B cell (primary cell): ENCODE measurements at regions of chr1 and their contacts with region 1.

Region 1: GRCh38 chr1:59947047-59947938 is 20.7 kb upstream of the CYP2J2 start:
- DNase-seq: peak; percentile 61
- ATAC-seq: peak; percentile 75
- H3K4me3 ChIP-seq: no peak overlapping the region
- H3K4me3 Mint-ChIP-seq: no peak overlapping the region
- H3K27ac ChIP-seq: no peak overlapping the region
- H3K27ac Mint-ChIP-seq: no peak overlapping the region
- H3K4me1 ChIP-seq: no peaks in the 10 kb centered on the region
- H3K4me1 Mint-ChIP-seq: no peaks in the 10 kb centered on the region
- H3K27me3 ChIP-seq: peaks cover 0 to 5% (median 2%) of the 10 kb centered on the region in 4 experiments
- H3K27me3 Mint-ChIP-seq: peaks cover 10% of the 10 kb centered on the region
- CTCF ChIP-seq: peak; percentile 93

Region 2: DNA sequence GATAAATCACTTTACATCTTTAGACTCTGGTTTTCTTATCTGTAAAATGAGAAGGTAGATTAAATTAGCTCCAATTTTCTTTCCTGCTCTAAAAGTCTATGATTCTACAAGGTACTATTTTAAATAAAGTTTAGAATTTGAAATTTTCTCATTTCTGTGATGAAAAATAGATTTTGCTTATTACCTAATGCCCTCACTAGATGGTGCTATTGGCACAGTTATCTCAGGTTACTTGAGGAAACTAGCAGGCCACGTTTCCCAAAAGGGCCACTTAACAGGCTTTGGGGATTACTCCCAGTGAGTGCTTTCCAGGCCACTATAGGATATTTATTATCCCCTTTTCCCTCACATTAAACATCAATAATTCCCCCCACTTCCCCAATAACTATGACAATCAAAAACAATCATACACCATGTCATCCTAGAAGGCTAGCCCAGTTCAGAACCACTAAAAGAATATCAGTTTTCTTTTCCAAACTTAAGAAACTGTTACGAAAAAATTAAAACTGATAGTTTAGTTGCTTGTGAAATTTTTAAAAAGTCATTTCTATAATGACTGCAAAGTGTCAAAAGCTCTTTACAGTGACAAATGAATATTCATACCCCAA is 1431.4 kb before region 1 on chr1:
- CTCF ChIA-PET with region 1: interaction called, 7 read pairs
- POLR2A ChIA-PET with region 1: no interaction called
- intact Hi-C with region 1: loop called (anchors 5 kb)
- DNase-seq: peak; percentile 76
- ATAC-seq: peak; percentile 51
- H3K4me3 ChIP-seq: no peak overlapping the region
- H3K4me3 Mint-ChIP-seq: no peak overlapping the region
- H3K27ac ChIP-seq: peak overlapping the region in 1 of 2 donors; percentile 9
- H3K27ac Mint-ChIP-seq: peak overlapping the region; percentile 46
- H3K4me1 ChIP-seq: no peaks in the 10 kb centered on the region
- H3K4me1 Mint-ChIP-seq: no peaks in the 10 kb centered on the region
- H3K27me3 ChIP-seq: no peaks in the 10 kb centered on the region
- H3K27me3 Mint-ChIP-seq: no peaks in the 10 kb centered on the region
- CTCF ChIP-seq: peak; percentile 90

Region 3: GRCh38 chr1:58739856-58740466 is 1207.3 kb before region 1 on chr1:
- CTCF ChIA-PET with region 1: no interaction called
- POLR2A ChIA-PET with region 1: no interaction called
- intact Hi-C with region 1: loop called (anchors 1 kb)
- DNase-seq: peak; percentile 75
- ATAC-seq: peak; percentile 61
- H3K4me3 ChIP-seq: no peak overlapping the region
- H3K4me3 Mint-ChIP-seq: no peak overlapping the region
- H3K27ac ChIP-seq: no peak overlapping the region
- H3K27ac Mint-ChIP-seq: no peak overlapping the region
- H3K4me1 ChIP-seq: no peaks in the 10 kb centered on the region
- H3K4me1 Mint-ChIP-seq: no peaks in the 10 kb centered on the region
- H3K27me3 ChIP-seq: no peaks in the 10 kb centered on the region
- H3K27me3 Mint-ChIP-seq: peaks cover 12% of the 10 kb centered on the region
- CTCF ChIP-seq: peak; percentile 98

Region 4: DNA sequence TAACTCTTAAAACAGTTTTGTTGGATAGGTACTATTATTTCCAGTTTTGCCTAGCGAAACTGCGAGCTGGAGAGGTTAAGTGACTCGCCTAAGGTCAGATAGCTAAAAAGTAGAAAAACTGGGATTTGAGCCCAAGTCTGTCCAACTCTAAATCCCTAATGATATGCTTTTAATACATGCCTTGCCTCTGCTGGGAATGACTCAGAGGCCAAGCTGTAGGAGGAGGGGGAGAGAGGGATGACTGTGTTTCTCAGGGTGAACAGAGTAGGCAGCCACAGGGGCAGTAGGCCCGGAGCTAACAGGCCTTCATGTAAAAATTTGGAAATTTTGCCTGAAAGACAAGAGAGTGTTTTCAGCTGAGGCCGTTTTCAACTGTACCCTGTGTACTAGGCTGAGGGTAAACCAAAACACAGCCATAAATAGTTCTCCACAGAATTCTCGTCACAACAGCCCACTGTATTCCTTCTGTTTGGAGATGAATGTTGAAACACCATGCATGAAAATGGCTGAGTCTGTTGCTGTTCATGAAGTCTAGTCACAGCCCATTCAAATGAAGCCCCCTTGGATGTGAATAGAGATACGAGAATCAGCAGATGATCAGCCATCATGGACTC is 240.0 kb before region 1 on chr1:
- CTCF ChIA-PET with region 1: no interaction called
- POLR2A ChIA-PET with region 1: no interaction called
- intact Hi-C with region 1: no loop called
- DNase-seq: no peak
- ATAC-seq: no peak
- H3K4me3 ChIP-seq: no peak overlapping the region
- H3K4me3 Mint-ChIP-seq: no peak overlapping the region
- H3K27ac ChIP-seq: no peak overlapping the region
- H3K27ac Mint-ChIP-seq: no peak overlapping the region
- H3K4me1 ChIP-seq: no peaks in the 10 kb centered on the region
- H3K4me1 Mint-ChIP-seq: no peaks in the 10 kb centered on the region
- H3K27me3 ChIP-seq: no peaks in the 10 kb centered on the region
- H3K27me3 Mint-ChIP-seq: no peaks in the 10 kb centered on the region
- CTCF ChIP-seq: no peak

Region 5: GRCh38 chr1:59743324-59744091 is 203.8 kb before region 1 on chr1:
- CTCF ChIA-PET with region 1: no interaction called
- POLR2A ChIA-PET with region 1: no interaction called
- intact Hi-C with region 1: no loop called
- DNase-seq: no peak
- ATAC-seq: no peak
- H3K4me3 ChIP-seq: no peak overlapping the region
- H3K4me3 Mint-ChIP-seq: no peak overlapping the region
- H3K27ac ChIP-seq: no peak overlapping the region
- H3K27ac Mint-ChIP-seq: no peak overlapping the region
- H3K4me1 ChIP-seq: no peaks in the 10 kb centered on the region
- H3K4me1 Mint-ChIP-seq: no peaks in the 10 kb centered on the region
- H3K27me3 ChIP-seq: no peaks in the 10 kb centered on the region
- H3K27me3 Mint-ChIP-seq: no peaks in the 10 kb centered on the region
- CTCF ChIP-seq: no peak

Region 6: GRCh38 chr1:59879574-59879973 is 67.7 kb before region 1 on chr1:
- CTCF ChIA-PET with region 1: interaction called, 18 read pairs
- POLR2A ChIA-PET with region 1: no interaction called
- intact Hi-C with region 1: loop called (anchors 2 kb)
- DNase-seq: peak; percentile 25
- ATAC-seq: no peak
- H3K4me3 ChIP-seq: no peak overlapping the region
- H3K4me3 Mint-ChIP-seq: no peak overlapping the region
- H3K27ac ChIP-seq: no peak overlapping the region
- H3K27ac Mint-ChIP-seq: no peak overlapping the region
- H3K4me1 ChIP-seq: no peaks in the 10 kb centered on the region
- H3K4me1 Mint-ChIP-seq: no peaks in the 10 kb centered on the region
- H3K27me3 ChIP-seq: no peaks in the 10 kb centered on the region
- H3K27me3 Mint-ChIP-seq: peaks cover 7% of the 10 kb centered on the region
- CTCF ChIP-seq: no peak

Region 7: DNA sequence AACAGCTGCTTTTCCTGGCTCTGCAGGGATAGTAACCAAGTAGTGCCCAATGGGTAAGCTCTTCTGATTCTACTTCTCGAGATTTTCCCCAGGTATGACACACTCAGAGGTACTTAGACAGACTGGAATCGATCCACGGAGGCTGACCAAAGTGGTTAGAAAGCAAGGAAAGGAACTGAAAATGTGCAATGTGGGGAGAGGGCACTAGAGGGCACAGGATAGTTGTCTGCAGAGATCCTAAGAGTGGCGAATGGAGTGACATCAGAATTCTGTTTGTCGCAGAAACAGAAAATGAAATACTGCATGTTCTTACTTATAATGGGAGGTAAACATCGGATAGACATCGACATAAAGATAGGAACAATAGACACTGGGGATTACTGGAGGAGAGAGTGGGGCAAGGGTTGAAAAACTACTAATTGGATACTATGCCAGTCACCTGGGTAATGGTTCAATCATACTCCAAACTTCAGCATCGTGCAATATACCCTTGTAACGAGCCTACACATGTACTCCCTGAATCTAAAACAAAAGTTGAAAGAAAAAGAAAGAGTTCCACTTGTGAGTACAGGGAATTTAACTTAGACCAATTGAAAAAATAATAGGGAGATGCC is 44.0 kb before region 1 on chr1:
- CTCF ChIA-PET with region 1: interaction called, 30 read pairs
- POLR2A ChIA-PET with region 1: no interaction called
- intact Hi-C with region 1: loop called (anchors 1 kb)
- DNase-seq: peak; percentile 26
- ATAC-seq: no peak
- H3K4me3 ChIP-seq: no peak overlapping the region
- H3K4me3 Mint-ChIP-seq: no peak overlapping the region
- H3K27ac ChIP-seq: no peak overlapping the region
- H3K27ac Mint-ChIP-seq: no peak overlapping the region
- H3K4me1 ChIP-seq: no peaks in the 10 kb centered on the region
- H3K4me1 Mint-ChIP-seq: peaks cover 4% of the 10 kb centered on the region
- H3K27me3 ChIP-seq: no peaks in the 10 kb centered on the region
- H3K27me3 Mint-ChIP-seq: peaks cover 4% of the 10 kb centered on the region
- CTCF ChIP-seq: peak; percentile 44

Region 8: GRCh38 chr1:59971464-59971911 is 24.2 kb after region 1 on chr1:
- CTCF ChIA-PET with region 1: interaction called, 13 read pairs
- POLR2A ChIA-PET with region 1: no interaction called
- intact Hi-C with region 1: no loop called
- DNase-seq: peak; percentile 49
- ATAC-seq: no peak
- H3K4me3 ChIP-seq: no peak overlapping the region
- H3K4me3 Mint-ChIP-seq: no peak overlapping the region
- H3K27ac ChIP-seq: no peak overlapping the region
- H3K27ac Mint-ChIP-seq: no peak overlapping the region
- H3K4me1 ChIP-seq: peaks cover 3 to 5% of the 10 kb centered on the region in 2 donors
- H3K4me1 Mint-ChIP-seq: peaks cover 5% of the 10 kb centered on the region
- H3K27me3 ChIP-seq: peaks cover 0 to 8% (median 3%) of the 10 kb centered on the region in 4 experiments
- H3K27me3 Mint-ChIP-seq: peaks cover 34% of the 10 kb centered on the region
- CTCF ChIP-seq: peak; percentile 80

Region 9: DNA sequence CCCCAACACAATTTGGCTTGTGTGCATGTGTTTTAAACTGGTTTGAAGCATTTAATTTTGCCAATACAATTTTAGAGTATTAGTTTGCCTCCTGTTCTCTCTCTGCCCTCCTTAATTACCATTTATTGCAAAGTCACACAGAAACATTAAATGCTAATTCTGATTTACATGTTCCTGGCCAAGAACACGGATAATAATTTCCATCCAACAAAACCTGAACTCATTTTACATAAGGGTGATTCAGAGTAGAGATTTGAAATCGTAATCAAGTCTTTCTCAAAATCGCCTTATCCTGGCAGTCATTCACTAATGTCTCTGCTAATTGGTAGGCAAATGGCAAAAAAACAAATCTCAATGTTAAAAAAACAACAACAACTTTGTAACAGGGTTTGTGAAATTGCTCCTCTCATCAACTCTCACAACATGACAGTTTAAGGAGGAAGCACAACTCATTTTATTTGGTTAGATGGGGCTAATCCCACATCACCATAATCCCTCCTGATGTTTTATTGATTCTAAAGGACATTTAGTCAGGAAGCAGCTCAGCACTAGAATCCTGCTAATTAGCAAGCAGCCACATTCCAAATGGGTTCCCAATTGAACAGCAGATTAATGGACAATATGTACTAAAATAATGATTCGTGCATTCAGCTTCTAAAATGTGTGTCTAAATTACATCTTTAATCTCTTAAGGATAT is 70.4 kb after region 1 on chr1:
- CTCF ChIA-PET with region 1: no interaction called
- POLR2A ChIA-PET with region 1: no interaction called
- intact Hi-C with region 1: no loop called
- DNase-seq: no peak
- ATAC-seq: no peak
- H3K4me3 ChIP-seq: no peak overlapping the region
- H3K4me3 Mint-ChIP-seq: no peak overlapping the region
- H3K27ac ChIP-seq: no peak overlapping the region
- H3K27ac Mint-ChIP-seq: no peak overlapping the region
- H3K4me1 ChIP-seq: no peaks in the 10 kb centered on the region
- H3K4me1 Mint-ChIP-seq: no peaks in the 10 kb centered on the region
- H3K27me3 ChIP-seq: no peaks in the 10 kb centered on the region
- H3K27me3 Mint-ChIP-seq: peaks cover 22% of the 10 kb centered on the region
- CTCF ChIP-seq: no peak

Region 10: DNA sequence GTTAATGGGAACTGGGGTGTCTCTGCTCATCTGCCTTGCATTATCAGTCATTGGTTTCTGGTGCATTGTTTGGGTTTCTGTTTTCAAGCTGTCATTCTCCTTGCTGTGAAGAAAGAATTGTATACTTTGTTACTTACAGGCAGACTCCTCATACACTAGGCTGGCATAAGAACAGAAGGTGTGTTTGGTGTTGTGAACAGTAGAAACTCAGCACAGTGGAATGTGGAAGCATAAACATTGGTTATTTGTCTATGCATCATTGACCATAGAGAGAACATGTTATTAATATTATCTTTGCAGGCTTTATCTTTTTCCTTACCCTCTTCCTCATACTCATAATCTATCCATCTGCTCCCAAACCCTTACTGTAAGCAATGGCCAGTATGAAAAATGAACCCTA is 108.0 kb after region 1 on chr1:
- CTCF ChIA-PET with region 1: no interaction called
- POLR2A ChIA-PET with region 1: no interaction called
- intact Hi-C with region 1: no loop called
- DNase-seq: no peak
- ATAC-seq: no peak
- H3K4me3 ChIP-seq: no peak overlapping the region
- H3K4me3 Mint-ChIP-seq: no peak overlapping the region
- H3K27ac ChIP-seq: no peak overlapping the region
- H3K27ac Mint-ChIP-seq: no peak overlapping the region
- H3K4me1 ChIP-seq: no peaks in the 10 kb centered on the region
- H3K4me1 Mint-ChIP-seq: no peaks in the 10 kb centered on the region
- H3K27me3 ChIP-seq: no peaks in the 10 kb centered on the region
- H3K27me3 Mint-ChIP-seq: no peaks in the 10 kb centered on the region
- CTCF ChIP-seq: no peak